CD8-positive, alpha-beta T cell (primary cell): ENCODE measurements at regions of chr19 and their contacts with region 1.

Region 1: DNA sequence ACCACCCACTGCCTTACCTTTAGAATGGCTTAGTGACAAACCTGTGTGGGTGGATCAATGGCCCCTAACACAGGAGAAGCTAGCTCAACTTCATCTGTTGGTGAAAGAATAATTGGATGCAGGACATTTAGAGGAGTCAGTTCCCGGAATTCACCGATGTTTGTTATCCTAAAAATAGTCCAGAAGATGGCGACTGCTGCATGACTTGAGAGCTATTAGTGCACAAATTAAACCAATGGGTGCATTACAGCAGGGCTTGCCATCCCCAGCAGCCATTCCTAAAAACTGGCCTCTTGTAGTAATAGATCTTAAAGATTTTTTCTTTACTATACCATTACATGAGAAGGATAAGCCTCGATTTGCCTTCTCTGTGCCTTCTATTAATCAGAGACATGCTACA is 46.8 kb upstream of the ZNF726 start:
- DNase-seq: no peak
- ATAC-seq: no peak
- H3K4me3 ChIP-seq: no peak overlapping the region
- H3K4me3 Mint-ChIP-seq: no peak overlapping the region
- H3K27ac ChIP-seq: no peak overlapping the region
- H3K27ac Mint-ChIP-seq: no peak overlapping the region
- H3K4me1 ChIP-seq: no peaks in the 10 kb centered on the region
- H3K4me1 Mint-ChIP-seq: no peaks in the 10 kb centered on the region
- H3K27me3 ChIP-seq: no peaks in the 10 kb centered on the region
- H3K27me3 Mint-ChIP-seq: no peaks in the 10 kb centered on the region
- CTCF ChIP-seq: no peak

Region 2: DNA sequence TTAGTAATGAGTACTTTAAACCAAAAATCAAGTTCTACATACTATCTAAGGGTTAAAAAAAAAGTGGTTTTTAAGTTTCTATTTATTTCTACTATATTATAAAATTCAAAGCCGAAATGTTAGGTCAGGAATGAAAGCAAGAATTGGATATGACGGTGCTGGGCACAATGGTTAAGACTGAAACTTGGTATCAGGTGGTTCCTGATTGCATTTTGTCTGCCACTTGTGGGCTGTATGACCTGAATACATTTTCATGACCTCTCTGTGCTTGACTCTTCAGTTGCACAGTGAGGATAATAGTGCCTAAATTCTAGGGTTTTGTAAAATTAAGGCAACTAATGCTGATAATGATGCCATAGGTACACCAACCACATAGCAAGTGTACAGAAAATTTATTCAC is 158.5 kb before region 1 on chr19:
- CTCF ChIA-PET with region 1: no interaction called
- POLR2A ChIA-PET with region 1: no interaction called
- intact Hi-C with region 1: no loop called
- DNase-seq: no peak
- ATAC-seq: no peak
- H3K4me3 ChIP-seq: no peak overlapping the region
- H3K4me3 Mint-ChIP-seq: no peak overlapping the region
- H3K27ac ChIP-seq: no peak overlapping the region
- H3K27ac Mint-ChIP-seq: no peak overlapping the region
- H3K4me1 ChIP-seq: no peaks in the 10 kb centered on the region
- H3K4me1 Mint-ChIP-seq: no peaks in the 10 kb centered on the region
- H3K27me3 ChIP-seq: no peaks in the 10 kb centered on the region
- H3K27me3 Mint-ChIP-seq: no peaks in the 10 kb centered on the region
- CTCF ChIP-seq: no peak

Region 3: DNA sequence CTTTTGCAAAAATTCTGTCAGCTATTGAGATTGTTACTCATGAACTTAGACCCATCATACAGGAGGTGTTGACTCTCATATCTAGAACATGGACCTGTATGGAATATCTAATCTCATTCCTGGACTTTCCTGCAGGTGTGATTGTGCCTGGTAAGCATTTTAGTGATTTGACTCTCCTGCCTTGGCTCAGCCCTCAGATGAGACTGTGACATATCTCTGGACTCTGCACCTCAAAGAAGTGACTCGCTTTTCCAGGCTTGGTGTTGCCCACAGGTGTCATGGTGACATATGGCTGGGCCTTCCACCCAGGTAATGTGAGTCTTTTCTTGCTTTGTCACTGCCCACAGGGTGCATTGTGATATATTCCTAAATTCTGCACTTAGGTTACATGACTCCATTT is 29.0 kb after region 1 on chr19:
- CTCF ChIA-PET with region 1: no interaction called
- POLR2A ChIA-PET with region 1: no interaction called
- intact Hi-C with region 1: no loop called
- DNase-seq: no peak
- ATAC-seq: no peak
- H3K4me3 ChIP-seq: no peak overlapping the region
- H3K4me3 Mint-ChIP-seq: no peak overlapping the region
- H3K27ac ChIP-seq: no peak overlapping the region
- H3K27ac Mint-ChIP-seq: no peak overlapping the region
- H3K4me1 ChIP-seq: no peaks in the 10 kb centered on the region
- H3K4me1 Mint-ChIP-seq: no peaks in the 10 kb centered on the region
- H3K27me3 ChIP-seq: no peaks in the 10 kb centered on the region
- H3K27me3 Mint-ChIP-seq: peaks cover 2% of the 10 kb centered on the region
- CTCF ChIP-seq: no peak

Region 4: GRCh38 chr19:23971598-23971997 is 103.7 kb after region 1 on chr19:
- CTCF ChIA-PET with region 1: no interaction called
- POLR2A ChIA-PET with region 1: no interaction called
- intact Hi-C with region 1: loop called in 1 of 2 experiments (anchors 1 kb)
- DNase-seq: peak in 1 of 9 experiments; percentile 6
- ATAC-seq: no peak
- H3K4me3 ChIP-seq: no peak overlapping the region
- H3K4me3 Mint-ChIP-seq: no peak overlapping the region
- H3K27ac ChIP-seq: no peak overlapping the region
- H3K27ac Mint-ChIP-seq: no peak overlapping the region
- H3K4me1 ChIP-seq: no peaks in the 10 kb centered on the region
- H3K4me1 Mint-ChIP-seq: peaks cover 5% of the 10 kb centered on the region
- H3K27me3 ChIP-seq: peaks cover 0 to 7% of the 10 kb centered on the region in 2 experiments
- H3K27me3 Mint-ChIP-seq: peaks cover 36% of the 10 kb centered on the region
- CTCF ChIP-seq: no peak

Region 5: GRCh38 chr19:24004166-24004565 is 136.3 kb after region 1 on chr19:
- CTCF ChIA-PET with region 1: no interaction called
- POLR2A ChIA-PET with region 1: no interaction called
- intact Hi-C with region 1: no loop called
- DNase-seq: no peak
- ATAC-seq: no peak
- H3K4me3 ChIP-seq: no peak overlapping the region
- H3K4me3 Mint-ChIP-seq: no peak overlapping the region
- H3K27ac ChIP-seq: no peak overlapping the region
- H3K27ac Mint-ChIP-seq: no peak overlapping the region
- H3K4me1 ChIP-seq: no peaks in the 10 kb centered on the region
- H3K4me1 Mint-ChIP-seq: no peaks in the 10 kb centered on the region
- H3K27me3 ChIP-seq: no peaks in the 10 kb centered on the region
- H3K27me3 Mint-ChIP-seq: no peaks in the 10 kb centered on the region
- CTCF ChIP-seq: no peak